Gastrocnemius medialis (tissue), 4 donors: ENCODE measurements at regions of chr18 and their contacts with region 1.

Region 1: DNA sequence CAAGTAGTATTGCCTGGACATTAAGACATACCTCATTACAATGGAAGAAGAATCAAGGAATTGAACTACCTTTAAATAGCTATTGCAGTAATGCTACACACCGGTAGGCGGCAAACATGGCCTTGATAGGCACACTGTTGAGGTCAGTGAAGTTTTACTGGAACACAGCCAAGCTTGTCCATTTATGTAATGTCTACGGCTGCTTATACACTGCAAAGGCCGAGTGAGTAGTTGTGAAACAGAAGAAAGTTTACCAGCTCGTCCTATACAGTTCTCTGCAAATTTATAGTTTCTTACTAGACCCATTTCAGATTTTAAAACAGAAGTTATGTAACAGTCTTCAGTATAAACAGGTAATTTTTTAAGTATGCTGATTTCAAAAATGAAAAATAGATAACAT is 38.8 kb downstream of the PPP4R1 start:
- DNase-seq: peak; percentile 68 to 73
- ATAC-seq: peak; percentile 100
- H3K4me3 ChIP-seq: no peak overlapping the region
- H3K27ac ChIP-seq: peak overlapping the region in 1 of 4 donors; percentile 25
- H3K4me1 ChIP-seq: peaks cover 5 to 9% of the 10 kb centered on the region in 2 donors
- H3K27me3 ChIP-seq: no peaks in the 10 kb centered on the region
- CTCF ChIP-seq: peak; percentile 73 to 85 (median 81)
- POLR2A ChIP-seq: no peak

Region 2: GRCh38 chr18:9771261-9771976 is 195.9 kb after region 1 on chr18:
- in situ Hi-C with region 1: no loop called
- intact Hi-C with region 1: loop called (anchors 1 kb)
- DNase-seq: peak; percentile 57 to 73
- ATAC-seq: peak; percentile 82 to 94
- H3K4me3 ChIP-seq: no peak overlapping the region
- H3K27ac ChIP-seq: peak overlapping the region in 1 of 4 donors; percentile 1
- H3K4me1 ChIP-seq: no peaks in the 10 kb centered on the region
- H3K27me3 ChIP-seq: no peaks in the 10 kb centered on the region
- CTCF ChIP-seq: peak; percentile 84 to 96 (median 89)
- POLR2A ChIP-seq: no peak

Region 3: DNA sequence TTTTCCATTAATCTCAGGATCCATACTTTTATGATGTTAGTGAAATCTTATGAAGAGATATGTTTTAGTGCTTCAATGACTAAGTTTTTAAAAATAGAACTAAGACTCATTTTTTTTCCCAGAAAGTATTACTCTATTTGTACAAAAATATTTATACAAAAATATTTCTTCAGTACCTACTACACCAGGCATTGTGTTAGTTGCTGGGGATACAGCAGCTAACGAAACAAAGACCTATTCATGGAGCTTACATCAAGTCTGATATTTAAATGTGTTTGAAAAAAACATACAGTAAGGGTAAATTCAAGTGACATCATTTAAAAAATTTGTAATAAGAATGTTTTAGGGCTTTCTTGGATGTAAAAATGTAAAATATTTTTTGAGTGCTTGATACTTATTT is 349.8 kb after region 1 on chr18:
- in situ Hi-C with region 1: loop called in 1 of 4 experiments (anchors 25 kb)
- intact Hi-C with region 1: no loop called
- DNase-seq: no peak
- ATAC-seq: no peak
- H3K4me3 ChIP-seq: no peak overlapping the region
- H3K27ac ChIP-seq: peak overlapping the region in 3 of 4 donors; percentile 1 to 25 (median 12)
- H3K4me1 ChIP-seq: peaks cover 92 to 96% of the 10 kb centered on the region in 2 donors
- H3K27me3 ChIP-seq: no peaks in the 10 kb centered on the region
- CTCF ChIP-seq: no peak
- POLR2A ChIP-seq: no peak

Region 4: DNA sequence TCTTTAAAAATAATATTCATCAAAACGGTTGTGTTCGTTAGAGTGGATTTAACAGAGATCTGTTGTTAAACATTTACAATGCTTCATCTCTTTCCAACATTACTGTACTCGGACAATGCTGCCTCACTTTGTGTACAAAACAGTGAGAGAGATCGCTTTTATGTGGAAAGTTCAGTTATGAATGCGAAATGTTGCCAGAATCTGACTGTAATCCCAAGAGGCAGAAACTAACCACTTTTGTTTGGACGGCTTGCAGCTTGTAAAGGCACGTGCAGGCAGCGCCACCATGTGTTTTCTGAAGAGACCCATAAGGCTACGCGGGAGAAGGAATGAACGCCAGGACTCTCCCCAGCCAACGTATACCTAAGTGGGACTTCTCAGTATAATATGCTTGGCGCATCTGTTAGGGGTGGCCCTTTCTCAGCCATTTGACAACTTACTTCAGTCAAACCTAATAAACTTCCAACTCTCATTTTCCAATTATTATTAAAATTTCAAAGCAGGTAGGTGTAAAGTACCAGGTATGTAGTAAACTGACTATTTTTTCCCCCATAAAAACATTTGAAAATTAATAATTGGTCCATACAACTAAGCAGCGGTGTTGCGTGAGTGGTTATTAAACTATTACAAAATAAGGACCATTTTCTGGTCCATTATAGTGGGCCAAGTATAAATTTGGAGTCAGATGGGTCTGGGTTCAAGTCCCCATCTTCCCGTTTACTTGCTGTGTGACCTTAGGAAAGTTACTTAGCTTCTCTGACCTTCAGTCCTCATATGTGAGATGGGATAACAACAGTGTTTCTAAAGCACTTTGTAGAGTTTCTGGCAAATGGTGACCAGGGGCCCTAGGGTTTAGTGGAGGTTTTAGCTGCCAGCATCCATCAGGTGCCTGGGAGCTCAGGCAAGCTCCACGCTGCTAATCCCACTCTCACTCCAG is 944.7 kb after region 1 on chr18:
- in situ Hi-C with region 1: loop called in 1 of 4 experiments (anchors 25 kb)
- intact Hi-C with region 1: loop called (anchors 10 kb)
- DNase-seq: peak; percentile 65 to 72
- ATAC-seq: peak; percentile 76 to 88
- H3K4me3 ChIP-seq: peak overlapping the region in 1 of 4 donors; percentile 23
- H3K27ac ChIP-seq: peak overlapping the region in 1 of 4 donors; percentile 2
- H3K4me1 ChIP-seq: peaks cover 3 to 26% of the 10 kb centered on the region in 2 donors
- H3K27me3 ChIP-seq: no peaks in the 10 kb centered on the region
- CTCF ChIP-seq: peak; percentile 52 to 77 (median 74)
- POLR2A ChIP-seq: no peak

Region 5: GRCh38 chr18:10525371-10526210 is 950.0 kb after region 1 on chr18 and contains the start of gene NAPG:
- in situ Hi-C with region 1: loop called in 1 of 4 experiments (anchors 25 kb)
- intact Hi-C with region 1: loop called (anchors 10 kb)
- DNase-seq: peak; percentile 74 to 85
- ATAC-seq: peak; percentile 90 to 93
- H3K4me3 ChIP-seq: peak within 1 kb of the TSS; percentile 73 to 99 (median 83)
- H3K27ac ChIP-seq: peak within 1 kb of the TSS; percentile 85 to 96 (median 89)
- H3K4me1 ChIP-seq: peaks cover 12 to 17% of the 10 kb centered on the region in 2 donors
- H3K27me3 ChIP-seq: no peaks in the 10 kb centered on the region
- CTCF ChIP-seq: no peak
- POLR2A ChIP-seq: peak; percentile 32 to 38
- total RNA-seq, gene NAPG: 13.8 to 29.6 (median 19.5) TPM